Right ventricle myocardium superior (tissue), 1 donor: ENCODE measurements at regions of chr2 and their contacts with region 1.

Region 1: GRCh38 chr2:158740621-158741020 is 54.5 kb upstream of the DAPL1 start:
- DNase-seq: no peak
- ATAC-seq: peak; percentile 5

Region 2: DNA sequence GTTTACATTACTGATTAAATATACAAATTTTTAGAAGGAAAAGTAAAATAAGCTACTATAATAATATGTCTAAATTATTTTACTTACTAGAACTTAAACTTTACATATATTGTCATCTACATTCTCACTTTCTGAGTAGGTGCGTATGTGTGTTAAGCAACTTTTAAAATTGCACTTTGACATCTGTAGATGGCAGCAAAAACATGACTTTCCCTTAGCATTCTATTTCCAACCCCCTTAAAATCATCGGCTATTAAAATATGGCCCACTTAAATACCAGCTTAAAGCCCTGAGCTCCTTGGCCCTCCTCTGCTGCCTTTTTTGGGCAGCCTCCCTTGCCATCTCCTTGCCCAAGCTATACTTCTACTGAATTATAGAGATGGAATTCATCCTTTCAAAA is 561.0 kb before region 1 on chr2:
- intact Hi-C with region 1: loop called (anchors 5 kb)
- DNase-seq: no peak
- ATAC-seq: peak; percentile 56

Region 3: DNA sequence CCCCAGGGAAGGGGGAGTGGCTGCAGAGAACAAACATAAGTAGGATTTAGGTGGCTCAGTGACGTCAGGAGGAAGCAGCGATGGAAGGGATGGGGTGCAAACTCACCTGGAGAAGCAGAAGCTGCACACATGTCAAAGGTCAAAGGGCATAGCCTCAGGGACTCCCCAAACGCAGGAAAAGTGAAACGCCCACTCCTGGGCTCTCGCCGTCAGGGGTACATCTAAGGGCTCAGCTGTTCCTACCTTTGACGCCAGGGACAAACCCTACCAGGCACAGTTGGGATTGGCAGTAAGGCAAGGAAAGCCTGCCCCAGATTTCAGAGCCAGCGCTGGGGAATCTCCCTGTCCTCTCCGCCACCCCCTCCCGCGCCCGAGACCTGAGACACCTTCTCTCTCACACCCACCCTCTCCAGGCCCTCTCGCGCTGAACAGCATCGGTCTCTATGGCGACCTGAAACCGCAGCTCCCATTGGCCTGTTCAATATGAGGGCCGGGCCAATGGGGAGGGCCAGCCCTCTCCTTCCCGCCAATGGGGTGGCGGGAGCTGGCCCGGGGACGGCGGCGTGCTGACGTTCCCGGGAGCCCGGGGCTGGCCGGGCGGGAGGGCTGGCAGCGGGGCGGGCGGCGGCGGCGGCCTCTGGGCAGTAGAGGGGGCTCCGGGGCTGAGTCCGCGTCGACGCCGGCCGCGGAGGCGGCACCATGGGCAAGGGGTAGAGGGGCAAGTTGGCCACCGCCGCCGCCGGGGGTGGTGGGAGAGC is 284.1 kb before region 1 on chr2 and contains the starts of genes CCDC148 and PKP4:
- intact Hi-C with region 1: loop called (anchors 5 kb)
- DNase-seq: peak; percentile 92
- ATAC-seq: peak; percentile 92
- total RNA-seq, gene CCDC148: 1.0 TPM
- total RNA-seq, gene PKP4: 49.6 TPM

Region 4: DNA sequence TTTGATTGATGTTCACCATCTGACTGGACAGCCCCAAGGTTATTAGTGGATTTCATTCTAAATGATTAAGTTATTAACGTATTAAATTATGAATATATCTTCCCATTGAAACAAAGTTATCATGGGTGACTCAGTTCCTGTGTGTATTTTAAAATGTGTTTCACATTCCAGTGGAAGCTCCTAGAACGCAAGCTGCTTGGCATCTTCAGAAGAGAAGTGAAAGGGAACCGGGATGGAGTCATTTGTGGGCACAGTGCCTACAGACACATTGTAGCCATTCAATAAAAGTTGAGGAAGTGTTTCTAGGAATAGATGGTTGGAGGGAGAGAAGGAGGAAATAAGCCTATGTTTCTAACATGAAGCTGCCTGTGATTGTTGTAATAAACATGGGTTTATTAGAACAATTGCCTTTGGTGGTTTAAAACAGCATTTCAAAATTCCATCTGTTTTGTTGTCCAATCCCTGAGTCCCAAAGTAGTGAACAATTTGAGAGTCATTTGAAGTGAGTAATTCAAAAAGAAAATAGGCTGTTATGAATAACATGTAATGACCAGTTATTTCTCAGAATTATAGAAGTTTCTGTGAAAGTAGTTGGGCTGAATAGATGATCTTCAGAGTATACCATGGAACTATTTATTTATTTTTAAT is 140.3 kb before region 1 on chr2:
- intact Hi-C with region 1: no loop called
- DNase-seq: peak; percentile 55
- ATAC-seq: peak; percentile 83

Region 5: DNA sequence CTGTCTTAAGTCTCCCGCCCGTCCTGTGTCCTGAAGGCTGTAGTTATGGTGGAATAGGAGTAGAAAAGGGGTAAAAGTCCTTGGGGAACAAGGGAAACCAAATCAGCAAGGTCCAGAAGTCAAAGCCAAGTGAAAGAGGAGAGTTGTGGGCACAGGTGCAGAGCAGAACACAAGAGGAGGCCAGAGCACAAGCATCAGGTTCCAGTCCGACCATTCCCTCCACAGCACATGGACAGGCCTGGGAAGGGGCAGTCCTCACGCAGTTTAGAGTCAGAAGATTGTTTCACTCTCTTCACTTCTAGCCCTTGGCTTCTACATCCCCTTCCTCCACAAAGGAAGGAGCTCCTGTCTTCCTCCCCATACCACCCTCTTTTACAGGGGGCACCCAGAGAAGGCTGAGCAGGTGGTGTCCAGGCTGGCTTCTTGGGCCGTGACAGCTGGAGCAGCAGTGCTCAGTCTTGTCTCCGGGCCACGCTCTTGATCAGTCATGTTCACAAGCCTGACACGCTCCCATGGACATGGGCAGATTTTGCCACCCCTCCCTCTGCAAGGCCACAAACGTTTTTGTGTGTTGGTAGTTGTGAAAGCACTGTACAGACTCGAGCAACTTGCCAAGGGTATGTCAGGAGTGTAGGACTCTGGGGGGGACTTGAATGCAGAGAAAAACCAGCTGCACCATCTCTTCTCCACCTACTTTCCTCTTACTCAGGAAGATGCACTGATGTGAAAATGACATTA is 84.0 kb before region 1 on chr2:
- intact Hi-C with region 1: loop called (anchors 5 kb)
- DNase-seq: no peak
- ATAC-seq: no peak

Region 6: GRCh38 chr2:158990397-158991209 is 250.0 kb after region 1 on chr2:
- intact Hi-C with region 1: no loop called
- DNase-seq: no peak
- ATAC-seq: no peak

Region 7: GRCh38 chr2:159140070-159140769 is 399.6 kb after region 1 on chr2:
- intact Hi-C with region 1: no loop called
- DNase-seq: no peak
- ATAC-seq: no peak